AG04449 (cell line): ENCODE measurements at regions of chr3 and their contacts with region 1.

Region 1: DNA sequence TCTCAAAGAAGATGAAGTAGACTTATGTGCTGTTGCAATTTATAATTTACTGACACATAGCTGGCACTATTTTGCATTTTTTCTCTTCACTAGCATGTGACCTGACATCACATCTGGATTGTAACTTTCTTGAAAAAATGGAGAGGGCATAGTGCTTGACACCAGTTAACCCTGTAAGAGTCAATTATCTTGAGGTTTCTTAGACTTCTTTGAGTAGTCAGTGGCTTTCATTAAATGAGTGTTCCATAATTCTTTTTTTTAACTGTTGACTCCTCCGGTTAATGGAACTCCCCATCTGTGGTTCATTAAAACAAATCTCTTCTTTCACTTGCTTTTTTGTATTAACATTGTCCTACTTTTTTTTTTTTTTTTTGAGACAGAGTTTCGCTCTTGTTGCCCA is 16.9 kb upstream of the PRKCI start:
- DNase-seq: no peak
- H3K4me3 ChIP-seq: no peak overlapping the region
- CTCF ChIP-seq: no peak

Region 2: GRCh38 chr3:170189398-170190256 is 15.7 kb before region 1 on chr3:
- CTCF ChIA-PET with region 1: interaction called, 18 read pairs
- POLR2A ChIA-PET with region 1: no interaction called
- DNase-seq: no peak
- H3K4me3 ChIP-seq: no peak overlapping the region
- CTCF ChIP-seq: no peak